ENCODE measurements at regions of chr3 and their contacts with region 1.

Region 1: GRCh38 chr3:122415720-122416654 is at the start of gene WDR5B:
- DNase-seq: peak; percentile 96
- H3K4me3 Mint-ChIP-seq: peak within 1 kb of the TSS; percentile 98
- H3K27ac Mint-ChIP-seq: peak within 1 kb of the TSS; percentile 99
- H3K4me1 Mint-ChIP-seq: peaks cover 48% of the 10 kb centered on the region
- H3K27me3 Mint-ChIP-seq: no peaks in the 10 kb centered on the region
- total RNA-seq, gene WDR5B: 4.3 and 5.6 TPM in 2 replicates

Region 2: DNA sequence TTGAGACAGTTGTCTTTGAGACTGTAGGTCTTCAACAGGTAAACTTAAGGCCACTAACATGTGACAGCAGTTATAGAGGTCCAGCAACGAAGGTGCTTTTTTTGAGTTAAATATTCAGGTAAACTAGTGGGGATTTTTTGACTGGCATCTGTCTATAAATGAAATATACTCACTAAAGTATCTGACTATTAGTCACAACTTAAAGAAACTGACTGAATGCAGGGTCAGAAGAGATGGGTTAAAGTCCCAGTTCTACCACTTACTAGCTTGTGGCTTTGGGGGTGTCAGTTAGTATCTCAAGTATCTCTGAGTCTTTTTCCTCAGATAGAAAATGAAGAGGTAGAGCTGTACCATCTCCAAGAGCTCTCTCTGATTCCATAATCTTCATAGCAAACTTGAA is 50.9 kb before region 1 on chr3:
- intact Hi-C with region 1: loop called (anchors 1 kb)
- DNase-seq: no peak
- H3K4me3 Mint-ChIP-seq: peak overlapping the region; percentile 42
- H3K27ac Mint-ChIP-seq: peak overlapping the region; percentile 91
- H3K4me1 Mint-ChIP-seq: peaks cover 47% of the 10 kb centered on the region
- H3K27me3 Mint-ChIP-seq: no peaks in the 10 kb centered on the region

Region 3: GRCh38 chr3:122392868-122393844 is 22.8 kb before region 1 on chr3:
- intact Hi-C with region 1: loop called (anchors 1 kb)
- DNase-seq: no peak
- H3K4me3 Mint-ChIP-seq: no peak overlapping the region
- H3K27ac Mint-ChIP-seq: no peak overlapping the region
- H3K4me1 Mint-ChIP-seq: peaks cover 46% of the 10 kb centered on the region
- H3K27me3 Mint-ChIP-seq: no peaks in the 10 kb centered on the region

Region 4: DNA sequence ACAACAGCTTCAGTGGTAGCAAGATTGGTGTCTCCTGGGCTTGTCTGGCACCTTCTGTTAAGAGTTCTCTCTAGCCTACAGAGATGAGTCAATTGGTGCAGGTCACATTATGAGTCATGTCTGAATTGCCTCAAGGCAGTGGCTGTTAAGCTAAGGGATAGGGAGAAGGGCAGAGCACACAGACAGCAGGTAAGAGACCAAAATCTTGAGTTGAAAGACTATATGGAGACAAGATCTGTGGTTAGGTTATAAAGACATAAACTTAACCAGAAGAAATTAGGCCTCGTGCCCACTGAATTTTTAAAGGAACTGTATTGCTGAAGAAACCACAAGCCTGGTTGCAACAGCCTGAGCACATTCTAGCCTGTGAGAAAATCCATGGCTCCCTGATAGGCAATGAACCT is 117.9 kb after region 1 on chr3:
- intact Hi-C with region 1: loop called (anchors 1 kb)
- DNase-seq: peak; percentile 46
- H3K4me3 Mint-ChIP-seq: no peak overlapping the region
- H3K27ac Mint-ChIP-seq: peak overlapping the region; percentile 80
- H3K4me1 Mint-ChIP-seq: peaks cover 60% of the 10 kb centered on the region
- H3K27me3 Mint-ChIP-seq: no peaks in the 10 kb centered on the region

Region 5: DNA sequence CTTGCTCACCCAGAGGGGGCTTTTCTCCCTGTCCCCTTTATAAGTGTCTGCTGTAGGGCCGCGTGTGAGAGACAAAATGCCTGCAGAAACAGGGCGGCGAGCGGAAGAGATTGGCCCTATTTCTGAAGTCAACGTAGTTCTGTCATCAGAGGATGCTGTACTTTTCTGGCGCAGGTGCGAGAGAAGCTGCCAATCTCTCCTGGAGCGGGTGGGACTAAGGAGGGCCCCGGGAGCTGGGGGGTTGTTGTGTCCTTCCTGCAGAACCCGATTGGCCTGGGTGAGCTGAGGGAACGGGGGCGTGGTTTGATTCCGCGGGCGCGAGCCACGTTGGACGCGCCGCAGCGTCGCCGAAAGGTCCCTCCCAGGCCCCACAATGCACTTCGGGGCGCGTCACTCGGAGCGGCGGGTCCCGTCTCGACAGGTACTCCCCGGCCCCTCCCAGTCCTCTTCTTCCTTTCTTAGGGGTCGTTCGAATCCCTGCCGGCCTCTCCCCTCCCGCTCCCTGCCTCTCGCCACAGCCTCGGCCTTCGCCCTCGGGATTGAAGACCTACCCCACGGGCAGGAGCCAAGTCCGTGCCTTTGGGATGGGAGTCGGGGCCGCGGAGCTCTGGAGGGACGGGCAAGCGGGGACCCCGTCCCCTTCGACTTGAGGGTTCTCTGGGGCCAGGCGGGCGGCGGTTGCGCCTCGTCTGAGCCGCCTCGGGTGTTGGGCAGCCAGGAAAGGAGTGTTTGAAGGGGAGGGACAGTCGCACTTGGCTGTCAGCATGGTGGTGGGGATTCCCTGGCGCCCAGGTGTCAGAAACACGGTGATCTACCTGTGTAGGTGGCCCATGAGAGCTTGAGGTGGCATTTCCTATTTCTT is 785.8 kb after region 1 on chr3 and contains the start of gene SEC22A:
- intact Hi-C with region 1: loop called (anchors 5 kb)
- DNase-seq: peak; percentile 95
- H3K4me3 Mint-ChIP-seq: peak within 1 kb of the TSS; percentile 87
- H3K27ac Mint-ChIP-seq: peak within 1 kb of the TSS; percentile 96
- H3K4me1 Mint-ChIP-seq: peaks cover 29% of the 10 kb centered on the region
- H3K27me3 Mint-ChIP-seq: peaks cover under 1% of the 10 kb centered on the region
- total RNA-seq, gene SEC22A: 15.8 and 18.5 TPM in 2 replicates

Measured in activated T-helper 1 cell treated with anti-CD3 and anti-CD28 coated beads, Interleukin-12 subunit alpha, Interleukin-12 subunit beta, Interleukin-2, Interleukin-4 antibody, amounts not matched to agents 30 ng/mL and 10 ng/mL and 1 ng/mL, durations not matched to agents 14 hours and 24 hours and 36 hours (primary cell).